Left colon (tissue), 2 donors: ENCODE measurements at regions of chr11 and their contacts with region 1.

Region 1: DNA sequence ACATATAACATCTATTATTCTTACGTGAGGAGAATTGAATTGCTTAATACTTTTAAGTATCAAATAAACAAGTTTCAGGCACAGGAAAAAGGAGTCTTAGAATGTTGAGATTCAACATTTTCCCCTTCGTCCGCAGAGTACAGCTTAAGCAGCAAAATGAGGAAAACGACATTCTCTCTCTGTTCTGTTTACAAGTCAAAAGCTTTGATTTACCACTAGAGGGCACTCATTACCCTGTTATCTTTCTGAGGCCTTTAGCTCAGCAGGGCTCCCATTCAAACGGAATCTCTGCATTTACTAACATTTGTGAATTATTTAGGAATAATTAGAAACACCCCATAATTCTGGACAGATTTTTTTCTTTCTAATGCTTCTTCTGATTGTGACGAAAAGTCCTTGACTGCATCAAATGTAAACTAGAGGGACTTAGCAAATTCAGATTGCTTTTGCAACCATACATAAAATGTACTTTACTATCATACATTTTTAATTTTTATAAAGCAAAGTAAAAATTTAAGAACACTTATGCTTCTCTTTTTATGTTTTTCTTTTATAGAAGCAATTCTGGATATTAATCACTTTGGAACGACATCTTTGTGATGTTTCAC is 75.0 kb downstream of the JRKL start:
- DNase-seq: no peak
- ATAC-seq: peak; percentile 90

Region 2: DNA sequence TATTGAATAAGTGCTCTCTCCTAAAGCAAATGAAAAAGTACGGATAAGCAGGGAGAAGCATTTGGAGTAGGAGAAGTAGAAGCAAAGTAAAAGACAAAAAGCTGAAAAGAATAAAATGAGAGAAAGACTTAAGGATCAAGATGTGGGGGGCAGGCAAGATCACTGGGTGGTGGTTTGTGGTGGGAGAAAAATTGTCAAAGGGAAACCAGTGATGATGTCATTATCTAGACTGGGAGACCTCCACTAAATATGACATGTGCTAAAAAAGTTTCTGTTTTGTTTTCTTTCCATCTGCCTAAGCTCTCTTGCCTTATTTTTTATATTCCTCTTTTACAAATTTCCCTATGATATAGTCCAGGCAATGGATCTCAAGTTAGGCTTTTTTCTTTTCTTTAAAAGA is 107.0 kb before region 1 on chr11:
- intact Hi-C with region 1: no loop called
- DNase-seq: no peak
- ATAC-seq: no peak

Region 3: DNA sequence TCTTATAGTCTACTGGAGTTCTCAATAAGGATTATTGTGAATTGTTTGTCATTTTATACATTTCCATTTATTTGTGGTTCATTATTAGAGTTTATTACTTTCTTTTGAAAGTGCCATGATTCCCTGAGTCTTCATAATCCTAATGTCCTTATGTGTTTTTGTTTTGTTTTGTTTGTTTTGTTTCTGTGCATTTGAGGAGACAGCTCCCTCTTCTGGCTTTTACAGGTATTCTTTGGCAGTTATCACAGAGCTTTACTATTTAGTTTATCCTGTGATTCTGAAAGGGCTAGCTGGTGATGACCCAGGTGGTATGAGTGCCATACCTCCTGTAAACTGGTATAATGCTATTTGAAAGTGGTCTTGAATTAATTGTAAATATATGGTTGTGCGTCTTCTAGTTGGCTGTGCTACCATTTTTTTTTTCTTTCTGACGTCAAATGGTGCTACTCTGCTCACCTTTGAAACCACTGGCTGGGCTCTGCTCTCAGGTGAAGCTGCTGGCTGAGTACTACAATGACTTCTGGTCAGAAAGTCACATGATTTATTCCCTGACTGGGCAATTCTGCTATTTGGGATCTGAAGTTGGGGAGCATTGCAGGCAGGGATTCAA is 676.2 kb after region 1 on chr11:
- intact Hi-C with region 1: loop called in 1 of 2 experiments (anchors 10 kb)
- DNase-seq: no peak
- ATAC-seq: no peak